HCT116 (cell line): ENCODE measurements at regions of chr20 and their contacts with region 1.

Region 1: GRCh38 chr20:25247956-25248785 is at the start of gene PYGB:
- DNase-seq: peak; percentile 41
- ATAC-seq: peak; percentile 85
- H3K4me3 ChIP-seq: peak within 1 kb of the TSS; percentile 79 to 80
- H3K27ac ChIP-seq: peak within 1 kb of the TSS; percentile 93
- H3K4me1 ChIP-seq: peaks cover 27 to 39% of the 10 kb centered on the region in 2 experiments
- H3K27me3 ChIP-seq: no peaks in the 10 kb centered on the region
- CTCF ChIP-seq: no peak
- POLR2A ChIP-seq: peak; percentile 96
- RAD21 ChIP-seq: no peak
- total RNA-seq, gene PYGB: 87.8 TPM

Region 2: DNA sequence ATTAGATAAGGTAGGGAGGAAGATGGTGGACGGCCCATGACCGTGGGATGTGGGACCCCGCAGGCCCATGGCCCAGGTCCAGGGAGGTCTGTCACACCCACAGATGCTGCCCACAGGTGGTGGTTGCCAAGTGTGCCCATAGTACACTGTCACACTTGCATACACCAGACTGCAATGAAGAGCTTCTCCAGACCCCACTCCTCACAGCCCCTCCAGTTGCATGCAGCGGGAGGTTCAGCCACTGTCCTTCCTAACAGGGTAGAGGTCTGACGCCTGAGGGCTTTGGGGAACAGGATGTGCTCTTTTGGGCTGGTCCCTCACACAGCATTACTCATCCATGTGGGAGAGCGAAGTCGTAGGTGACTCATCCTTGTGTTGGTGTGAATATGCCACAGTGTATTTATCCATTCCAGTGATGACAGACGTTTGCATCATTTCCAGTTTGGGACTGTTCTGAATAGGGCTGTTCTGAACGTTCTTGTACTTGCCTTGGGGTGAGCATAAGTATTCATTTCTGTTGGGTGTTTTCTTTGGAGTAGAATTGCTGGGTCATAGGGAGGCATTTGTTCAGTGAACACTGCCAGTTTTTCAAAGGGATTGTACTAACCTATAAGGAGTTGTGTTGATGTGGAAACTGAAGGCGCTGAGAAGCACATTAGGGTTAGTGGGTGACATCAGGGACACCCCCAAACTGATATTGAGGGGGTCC is 10.4 kb before region 1 on chr20:
- CTCF ChIA-PET with region 1: interaction called, 14 read pairs
- POLR2A ChIA-PET with region 1: interaction called, 13 read pairs
- RAD21 ChIA-PET with region 1: no interaction called
- intact Hi-C with region 1: no loop called
- DNase-seq: peak; percentile 94
- ATAC-seq: peak; percentile 91
- H3K4me3 ChIP-seq: peak overlapping the region; percentile 12 to 42
- H3K27ac ChIP-seq: peak overlapping the region; percentile 60
- H3K4me1 ChIP-seq: peaks cover 39 to 67% of the 10 kb centered on the region in 2 experiments
- H3K27me3 ChIP-seq: no peaks in the 10 kb centered on the region
- CTCF ChIP-seq: no peak
- POLR2A ChIP-seq: no peak
- RAD21 ChIP-seq: peak; percentile 30